WTC11 (cell line): ENCODE measurements at regions of chr17 and their contacts with region 1.

Region 1: DNA sequence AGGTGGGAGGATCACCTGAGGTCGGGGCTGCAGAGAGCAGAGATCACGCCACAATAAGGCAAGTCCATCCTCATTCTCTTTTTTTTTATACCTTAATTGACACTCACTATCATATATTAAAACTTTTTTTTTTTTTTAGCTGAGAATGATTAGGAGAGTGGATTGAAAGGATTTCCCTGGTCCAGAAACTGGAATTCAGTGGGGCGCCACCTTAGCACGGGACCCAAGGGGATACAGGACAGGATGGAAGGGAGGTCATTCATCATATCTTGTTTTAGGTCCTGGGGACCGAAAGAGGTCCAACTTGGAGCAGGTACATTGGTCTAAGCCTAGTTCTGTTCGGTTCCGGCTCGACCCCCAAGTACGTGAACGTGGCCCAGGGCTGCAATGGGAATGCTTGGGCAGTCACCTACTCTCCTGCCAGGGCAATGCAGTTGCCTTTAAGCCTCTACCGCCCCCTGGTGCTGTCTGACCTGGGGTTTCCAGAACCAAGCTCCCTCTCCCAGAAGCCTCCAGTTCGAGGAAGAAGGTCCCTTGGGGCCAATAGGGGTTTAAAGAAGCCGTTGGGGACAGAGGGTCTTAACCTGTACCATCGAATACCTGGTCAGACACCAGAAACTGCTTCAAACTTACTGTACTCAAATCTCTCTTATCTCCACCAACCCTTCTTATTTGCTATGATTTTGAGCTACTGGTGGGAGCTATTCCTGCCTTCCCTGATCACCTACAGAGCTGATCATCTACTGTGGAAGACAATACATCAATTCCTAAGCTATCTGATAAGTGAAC is 19.9 kb upstream of the GPATCH8 start:
- DNase-seq: peak; percentile 91
- ATAC-seq: peak; percentile 99
- H3K4me3 Mint-ChIP-seq: no peak overlapping the region
- H3K27ac Mint-ChIP-seq: no peak overlapping the region
- H3K4me1 Mint-ChIP-seq: no peaks in the 10 kb centered on the region
- H3K27me3 Mint-ChIP-seq: peaks cover 14% of the 10 kb centered on the region
- CTCF ChIP-seq: 0 out of 2 replicates have a peak, but pooled peaks have one; percentile 51

Region 2: DNA sequence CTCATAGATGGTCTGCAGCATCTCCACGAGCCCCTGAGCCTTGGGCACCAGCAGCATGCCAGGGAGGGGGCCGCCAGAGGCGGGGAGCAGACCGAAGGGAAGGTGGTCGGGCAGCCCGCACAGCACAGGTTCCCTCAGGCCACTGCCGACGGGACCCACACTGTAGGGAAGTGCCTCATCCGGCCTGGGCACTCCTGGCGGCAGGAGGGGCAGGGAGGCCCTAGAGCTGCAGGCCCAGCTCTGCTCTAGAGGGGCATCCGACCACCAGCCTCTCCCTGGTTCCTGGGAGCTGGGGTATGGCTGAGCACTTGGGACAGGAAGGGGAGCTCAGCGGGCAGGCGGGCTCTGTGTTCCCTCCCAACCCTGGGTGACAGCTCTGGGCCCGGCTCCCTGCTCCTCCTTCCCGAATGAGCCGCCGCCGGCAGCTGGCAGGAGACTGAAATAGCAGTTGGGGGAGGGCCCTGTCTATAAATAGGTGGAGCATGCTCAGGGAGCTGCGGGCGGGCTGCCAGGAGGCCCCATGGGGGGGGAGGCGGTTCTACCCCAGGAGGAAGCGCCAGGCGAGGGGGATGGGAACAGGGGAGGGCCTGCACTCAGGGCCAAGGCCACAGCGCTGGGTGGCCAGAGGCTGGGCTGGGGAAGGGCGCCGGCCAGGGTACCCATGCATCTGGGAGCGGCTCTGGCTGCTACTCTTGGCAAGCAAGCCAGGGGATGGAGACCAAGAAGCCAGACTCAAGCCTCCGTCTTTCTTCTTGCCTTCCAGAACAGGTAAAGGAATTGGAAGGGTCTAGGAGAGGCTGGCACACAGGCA is 412.0 kb before region 1 on chr17:
- CTCF ChIA-PET with region 1: no interaction called
- POLR2A ChIA-PET with region 1: no interaction called
- DNase-seq: peak; percentile 82
- ATAC-seq: peak; percentile 75
- H3K4me3 Mint-ChIP-seq: peak overlapping the region; percentile 49
- H3K27ac Mint-ChIP-seq: no peak overlapping the region
- H3K4me1 Mint-ChIP-seq: peaks cover 48% of the 10 kb centered on the region
- H3K27me3 Mint-ChIP-seq: no peaks in the 10 kb centered on the region
- CTCF ChIP-seq: no peak

Region 3: GRCh38 chr17:44363613-44364159 is 159.4 kb before region 1 on chr17 and contains the start of gene FAM171A2:
- CTCF ChIA-PET with region 1: interaction called, 25 read pairs
- POLR2A ChIA-PET with region 1: no interaction called
- DNase-seq: peak; percentile 79
- ATAC-seq: peak; percentile 76
- H3K4me3 Mint-ChIP-seq: peak within 1 kb of the TSS; percentile 74
- H3K27ac Mint-ChIP-seq: no peak within 1 kb of the TSS
- H3K4me1 Mint-ChIP-seq: peaks cover 22% of the 10 kb centered on the region
- H3K27me3 Mint-ChIP-seq: peaks cover 42% of the 10 kb centered on the region
- CTCF ChIP-seq: peak; percentile 79
- total RNA-seq, gene FAM171A2: 28.2 to 29.9 TPM (median 28.5 TPM) in 3 replicates

Region 4: DNA sequence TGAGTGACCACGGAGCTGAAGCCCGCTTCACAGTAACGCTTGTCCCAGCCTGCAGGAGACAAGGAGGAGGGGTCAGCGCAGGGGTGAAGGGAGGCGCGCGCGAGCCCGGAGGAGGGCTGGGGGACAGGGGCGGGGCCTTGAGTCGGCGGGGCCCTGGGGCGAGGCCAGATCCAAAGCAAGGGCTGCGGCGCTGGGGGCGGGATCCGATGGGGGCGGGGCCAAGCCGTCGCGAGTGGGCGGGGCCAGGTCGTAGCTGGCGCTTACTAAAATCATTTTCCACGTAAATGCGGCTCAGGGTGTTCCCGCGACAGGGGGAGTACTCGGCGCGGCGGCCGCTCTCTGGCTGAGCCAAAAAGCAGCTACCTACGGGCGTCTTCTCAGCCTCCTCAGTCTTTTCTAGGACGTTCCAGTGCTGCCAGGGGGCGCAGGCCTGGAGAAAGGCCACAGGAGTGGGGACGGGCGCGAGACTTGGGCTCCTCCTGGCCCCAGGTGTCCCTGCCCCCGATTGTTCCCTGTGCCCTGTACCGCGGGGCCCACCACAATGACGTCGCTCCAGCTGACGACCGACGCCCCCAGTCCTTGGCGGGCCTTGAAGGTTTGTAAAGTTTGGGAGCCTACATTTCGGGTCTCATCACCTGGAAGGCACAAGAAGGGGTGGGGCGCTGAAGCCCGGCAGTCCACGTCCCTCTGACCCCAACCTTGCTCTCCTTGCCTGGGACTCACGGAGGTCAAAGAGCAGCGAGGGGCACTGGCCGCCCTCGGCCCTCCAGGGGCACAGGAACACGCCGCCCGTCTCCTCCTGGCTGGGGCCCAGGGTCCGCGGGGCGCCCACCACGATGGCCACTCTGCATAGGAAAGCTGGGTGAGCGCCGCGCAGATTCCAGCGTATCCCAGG is 137.5 kb before region 1 on chr17:
- CTCF ChIA-PET with region 1: interaction called, 21 read pairs
- POLR2A ChIA-PET with region 1: interaction called, 5 read pairs
- DNase-seq: peak; percentile 96
- ATAC-seq: peak; percentile 90
- H3K4me3 Mint-ChIP-seq: peak overlapping the region; percentile 80
- H3K27ac Mint-ChIP-seq: no peak overlapping the region
- H3K4me1 Mint-ChIP-seq: peaks cover 19% of the 10 kb centered on the region
- H3K27me3 Mint-ChIP-seq: peaks cover 59% of the 10 kb centered on the region
- CTCF ChIP-seq: no peak

Region 5: GRCh38 chr17:44444735-44445105 is 78.4 kb before region 1 on chr17:
- CTCF ChIA-PET with region 1: interaction called, 45 read pairs
- POLR2A ChIA-PET with region 1: no interaction called
- DNase-seq: no peak
- ATAC-seq: no peak
- H3K4me3 Mint-ChIP-seq: no peak overlapping the region
- H3K27ac Mint-ChIP-seq: no peak overlapping the region; the same call in 1 of the 2 replicates
- H3K4me1 Mint-ChIP-seq: peaks cover 14% of the 10 kb centered on the region
- H3K27me3 Mint-ChIP-seq: no peaks in the 10 kb centered on the region
- CTCF ChIP-seq: no peak

Region 6: DNA sequence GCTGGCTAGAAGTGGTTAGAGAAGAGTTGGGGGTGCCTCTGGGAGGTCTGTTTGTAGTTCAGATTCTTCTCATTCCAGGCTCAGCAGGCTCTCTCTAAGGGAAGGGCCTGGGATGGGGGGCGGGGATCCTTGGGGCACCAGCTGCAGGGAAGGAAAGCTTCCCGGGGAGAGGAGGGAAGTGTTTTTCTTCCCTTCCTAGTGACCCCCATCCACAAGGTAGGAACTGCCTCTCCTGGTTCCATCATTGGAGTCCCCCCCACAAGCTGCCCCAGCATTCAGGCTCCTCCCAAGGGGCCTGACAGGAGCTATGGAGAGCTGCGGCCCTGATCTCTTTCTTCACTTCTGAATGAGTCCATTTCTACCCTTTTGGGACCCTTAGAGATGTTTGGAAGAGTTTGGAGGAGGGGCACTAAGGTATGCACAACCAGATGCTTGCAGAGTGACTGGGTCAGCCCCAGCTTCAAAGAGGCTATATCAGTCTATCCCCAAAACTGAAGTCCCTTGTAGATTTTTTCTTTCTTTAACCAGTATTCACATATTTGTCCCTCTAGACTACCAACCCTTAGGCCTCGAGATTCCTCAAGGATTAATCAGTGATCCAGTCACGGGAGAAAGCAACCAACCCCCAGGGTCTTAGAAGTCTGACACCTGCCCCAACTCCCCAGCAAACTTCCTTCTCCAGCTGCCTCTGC is 20.3 kb after region 1 on chr17:
- CTCF ChIA-PET with region 1: interaction called, 17 read pairs
- POLR2A ChIA-PET with region 1: no interaction called
- DNase-seq: peak; percentile 85
- ATAC-seq: peak; percentile 68
- H3K4me3 Mint-ChIP-seq: peak overlapping the region; percentile 60
- H3K27ac Mint-ChIP-seq: peak overlapping the region; percentile 41
- H3K4me1 Mint-ChIP-seq: peaks cover 93% of the 10 kb centered on the region
- H3K27me3 Mint-ChIP-seq: peaks cover 89% of the 10 kb centered on the region
- CTCF ChIP-seq: no peak